ENCODE measurements at regions of chr19 and their contacts with region 1.

Region 1: DNA sequence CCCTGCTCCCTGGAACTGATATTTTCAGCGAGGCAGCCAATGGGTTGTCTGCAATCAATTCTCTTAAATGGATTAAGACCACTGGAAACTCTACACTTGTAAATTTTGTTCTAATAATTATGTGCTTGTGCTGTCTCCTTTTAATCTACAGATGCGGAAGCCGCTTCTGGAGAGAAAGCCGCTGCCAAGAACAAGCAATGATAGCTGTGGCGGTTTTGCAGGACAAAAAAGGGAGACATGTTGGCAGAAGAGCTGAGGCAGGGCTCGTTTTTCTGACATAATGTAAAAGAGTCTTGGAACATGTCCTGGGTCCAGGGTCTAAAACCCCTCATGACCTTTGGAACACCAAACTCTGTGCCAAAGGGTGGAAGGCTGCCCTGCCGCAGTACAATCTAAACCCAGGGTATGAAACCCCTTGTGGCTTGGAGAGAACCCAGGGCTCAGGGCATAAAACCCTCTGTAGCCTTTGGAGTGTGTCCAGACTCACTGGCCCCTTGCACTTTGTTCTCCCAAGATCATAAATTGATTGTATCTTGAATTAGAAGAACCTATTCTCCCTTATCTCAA is 12.7 kb downstream of the ZNF417 start:
- DNase-seq: no peak
- H3K4me3 ChIP-seq: no peak overlapping the region
- CTCF ChIP-seq: no peak

Region 2: GRCh38 chr19:57803594-57804325 is 99.9 kb before region 1 on chr19:
- CTCF ChIA-PET with region 1: no interaction called
- POLR2A ChIA-PET with region 1: no interaction called
- DNase-seq: peak; percentile 77
- H3K4me3 ChIP-seq: peak overlapping the region; percentile 74
- CTCF ChIP-seq: no peak

Region 3: GRCh38 chr19:57888560-57889231 is 15.0 kb before region 1 on chr19 and contains the start of gene ZNF814:
- CTCF ChIA-PET with region 1: interaction called, 12 read pairs
- POLR2A ChIA-PET with region 1: no interaction called
- DNase-seq: peak; percentile 42
- H3K4me3 ChIP-seq: peak within 1 kb of the TSS; percentile 92
- CTCF ChIP-seq: peak; percentile 19

Region 4: DNA sequence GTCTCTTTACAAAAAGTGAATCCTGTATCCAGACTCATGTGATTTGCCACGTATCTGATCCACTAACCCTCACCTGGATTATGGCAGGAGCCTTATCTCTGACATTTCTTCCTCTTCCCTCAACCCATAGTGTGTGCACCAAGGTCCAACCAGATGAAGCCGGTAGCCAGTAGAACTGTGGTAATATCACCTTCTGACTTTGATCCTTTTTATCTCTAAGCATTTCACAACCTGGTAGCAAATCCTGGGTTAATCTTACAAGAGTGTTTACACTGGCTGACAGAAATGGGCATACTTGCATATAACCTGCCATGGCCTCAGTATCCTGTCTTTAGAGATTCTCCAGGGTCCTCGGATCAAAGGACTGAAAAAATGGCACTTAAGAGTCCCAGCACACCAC is 10.8 kb after region 1 on chr19:
- CTCF ChIA-PET with region 1: interaction called, 12 read pairs
- POLR2A ChIA-PET with region 1: no interaction called
- DNase-seq: no peak
- H3K4me3 ChIP-seq: no peak overlapping the region
- CTCF ChIP-seq: no peak

Region 5: DNA sequence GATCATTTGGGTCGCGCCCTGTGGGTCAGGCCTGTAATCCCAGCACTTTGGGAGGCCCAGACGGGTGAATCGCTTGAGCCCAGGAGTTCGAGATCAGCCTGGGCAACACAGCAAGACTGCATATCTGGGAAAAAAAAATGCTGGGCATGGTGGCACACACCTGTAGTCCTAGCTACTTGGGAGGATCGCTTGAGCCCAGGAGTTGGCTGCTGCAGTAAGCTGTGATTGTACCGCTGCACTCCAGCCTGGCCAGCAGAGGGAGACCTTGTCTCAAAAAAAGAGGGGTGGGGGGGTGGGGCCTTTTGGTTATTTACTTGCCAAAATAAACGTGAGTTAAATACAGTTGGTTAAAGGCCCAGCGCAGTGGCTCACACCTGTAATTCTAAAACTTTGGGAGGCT is 315.2 kb after region 1 on chr19:
- CTCF ChIA-PET with region 1: no interaction called
- POLR2A ChIA-PET with region 1: no interaction called
- DNase-seq: no peak
- H3K4me3 ChIP-seq: no peak overlapping the region
- CTCF ChIP-seq: no peak